CD14-positive monocyte (primary cell): ENCODE measurements at regions of chr1 and their contacts with region 1.

Region 1: DNA sequence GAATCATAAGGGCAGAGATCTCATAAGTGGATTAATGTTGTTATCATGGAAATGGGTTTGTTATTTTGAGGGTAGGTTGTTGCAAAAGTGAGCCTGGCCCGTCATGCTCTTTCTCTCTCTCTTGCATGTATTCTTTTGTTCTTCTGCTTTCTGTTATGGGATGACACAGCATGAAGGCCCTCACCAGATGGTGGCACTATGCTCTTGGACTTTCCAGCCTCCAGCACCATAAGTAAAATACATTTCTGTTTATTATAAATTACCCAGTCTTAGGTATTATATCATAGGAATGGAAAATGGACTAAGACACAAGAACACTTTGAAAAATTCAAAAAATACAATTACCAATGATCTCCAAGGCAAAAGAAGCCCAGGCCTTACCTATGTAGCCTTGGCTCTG is 676.1 kb downstream of the PTPRU start:
- DNase-seq: no peak
- H3K4me3 ChIP-seq: no peak overlapping the region
- H3K4me3 Mint-ChIP-seq: no peak overlapping the region
- H3K27ac ChIP-seq: no peak overlapping the region
- H3K27ac Mint-ChIP-seq: no peak overlapping the region
- H3K4me1 ChIP-seq: no peaks in the 10 kb centered on the region
- H3K4me1 Mint-ChIP-seq: no peaks in the 10 kb centered on the region
- H3K27me3 ChIP-seq: peaks cover 0 to 2% of the 10 kb centered on the region in 2 donors
- H3K27me3 Mint-ChIP-seq: peaks cover 2 to 5% (median 5%) of the 10 kb centered on the region in 3 donors
- CTCF ChIP-seq: peak; percentile 14

Region 2: DNA sequence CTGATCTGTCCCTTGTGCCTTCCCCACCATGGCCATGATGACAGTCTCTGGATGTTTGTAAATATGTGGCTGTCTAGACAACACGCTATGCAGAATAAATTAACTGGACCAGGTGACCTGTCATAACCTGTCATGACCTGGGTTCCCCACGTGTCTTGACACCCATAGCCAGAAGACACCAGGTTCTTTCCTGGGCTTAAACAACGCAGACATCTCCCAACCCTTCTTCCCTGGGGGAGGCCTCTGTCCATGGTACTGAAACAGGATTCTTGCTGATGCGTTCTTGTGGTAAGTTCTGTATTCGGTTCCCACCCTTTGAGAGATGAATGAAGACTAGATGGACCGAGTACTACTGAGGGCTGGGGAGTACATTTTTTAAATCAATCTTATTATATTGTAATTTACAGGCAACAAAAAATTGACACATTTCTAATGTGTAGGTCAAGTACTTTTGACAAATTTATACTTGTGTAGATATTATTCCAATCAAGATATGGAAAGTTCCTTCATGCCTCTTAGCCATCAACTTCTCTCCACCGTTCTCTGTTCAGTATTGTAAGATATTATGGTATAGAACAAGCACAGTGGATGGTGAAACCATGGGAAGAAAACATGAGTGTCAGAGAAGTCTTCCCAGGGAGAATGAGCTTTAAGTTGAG is 62.7 kb after region 1 on chr1:
- intact Hi-C with region 1: no loop called
- DNase-seq: no peak
- H3K4me3 ChIP-seq: no peak overlapping the region
- H3K4me3 Mint-ChIP-seq: no peak overlapping the region
- H3K27ac ChIP-seq: no peak overlapping the region
- H3K27ac Mint-ChIP-seq: no peak overlapping the region
- H3K4me1 ChIP-seq: no peaks in the 10 kb centered on the region
- H3K4me1 Mint-ChIP-seq: no peaks in the 10 kb centered on the region
- H3K27me3 ChIP-seq: no peaks in the 10 kb centered on the region
- H3K27me3 Mint-ChIP-seq: peaks cover 2 to 3% (median 2%) of the 10 kb centered on the region in 3 donors
- CTCF ChIP-seq: no peak

Region 3: GRCh38 chr1:30085811-30086770 is 173.7 kb after region 1 on chr1:
- intact Hi-C with region 1: loop called in 1 of 2 experiments (anchors 10 kb)
- DNase-seq: peak in 1 of 3 donors; percentile 20
- H3K4me3 ChIP-seq: no peak overlapping the region
- H3K4me3 Mint-ChIP-seq: no peak overlapping the region
- H3K27ac ChIP-seq: no peak overlapping the region
- H3K27ac Mint-ChIP-seq: no peak overlapping the region
- H3K4me1 ChIP-seq: no peaks in the 10 kb centered on the region
- H3K4me1 Mint-ChIP-seq: peaks cover 7% of the 10 kb centered on the region
- H3K27me3 ChIP-seq: no peaks in the 10 kb centered on the region
- H3K27me3 Mint-ChIP-seq: peaks cover 12 to 27% (median 15%) of the 10 kb centered on the region in 3 donors
- CTCF ChIP-seq: peak; percentile 69